Posterior cingulate gyrus (tissue), 11 donors: ENCODE measurements at regions of chr6 and their contacts with region 1.

Region 1: DNA sequence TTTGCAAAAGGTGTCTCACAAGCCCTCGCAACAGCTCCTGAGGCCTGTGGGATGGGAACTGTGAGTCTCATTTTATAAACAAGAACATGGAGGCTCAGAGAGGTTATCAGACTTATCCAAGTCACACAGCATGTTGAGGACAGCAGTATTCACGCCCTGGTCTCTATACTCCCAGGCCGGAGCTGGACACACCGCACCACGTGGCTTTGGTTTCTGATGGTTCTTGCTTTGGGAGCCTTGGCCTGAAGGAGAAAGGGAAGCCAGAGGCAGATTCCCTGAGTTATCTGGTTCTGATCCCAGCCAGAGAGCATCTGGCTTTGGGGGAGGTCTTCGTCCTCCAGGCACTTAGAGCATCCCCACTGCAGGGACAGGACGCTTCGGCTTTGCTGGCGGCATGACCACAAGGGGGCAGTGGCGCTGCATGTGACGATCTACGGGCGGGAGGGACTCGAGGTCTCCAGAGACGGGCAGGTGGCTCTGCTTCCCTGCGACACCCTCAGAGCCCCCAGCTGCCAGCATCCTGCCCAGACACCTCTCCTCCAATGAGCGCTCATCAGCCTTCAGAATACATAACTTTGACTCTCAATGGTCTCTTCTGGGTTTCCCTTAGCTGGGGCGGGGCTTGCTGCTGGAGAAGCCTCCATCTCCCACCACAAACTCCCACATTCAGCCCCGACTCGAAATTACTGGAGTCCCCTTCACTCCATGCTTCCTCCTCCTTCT is 51.4 kb upstream of the SAYSD1 start:
- DNase-seq: peak; percentile 58 to 97 (median 84)

Region 2: DNA sequence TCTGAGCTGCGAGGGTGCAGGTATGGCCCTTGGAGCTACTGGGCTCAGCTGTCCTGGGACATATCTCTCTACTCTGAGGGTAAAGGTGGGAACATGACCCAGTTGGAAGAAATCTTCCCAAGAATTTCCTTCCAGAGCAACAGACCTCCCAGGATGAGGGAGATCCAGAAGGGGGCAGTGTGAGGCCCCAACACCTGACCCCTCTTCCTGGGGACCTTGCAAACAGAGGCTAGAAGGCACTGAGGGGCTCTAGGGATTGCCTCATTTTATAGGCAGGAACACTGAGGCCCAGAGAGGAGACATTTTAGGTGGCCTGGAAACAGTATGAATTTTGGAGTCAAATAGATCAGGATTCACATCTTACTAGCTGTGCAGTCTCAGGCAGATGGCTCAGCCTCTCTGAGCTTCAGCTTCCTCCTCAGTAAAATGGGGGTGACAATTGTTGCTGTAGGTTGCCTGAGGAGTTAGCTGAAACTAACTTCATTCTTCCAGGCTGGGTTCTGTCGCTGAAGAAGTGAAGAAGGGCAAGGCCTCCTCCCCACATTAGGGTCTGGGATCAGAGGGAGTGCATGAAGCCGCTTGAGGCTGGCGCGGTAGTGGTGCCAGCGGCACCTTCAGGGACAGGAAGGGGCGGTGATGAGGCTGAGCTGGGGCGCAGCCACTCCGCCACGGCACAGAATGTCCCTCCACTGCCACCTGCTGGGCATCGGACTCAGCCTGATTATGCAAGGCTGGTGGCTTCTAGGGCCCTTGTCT is 136.5 kb after region 1 on chr6:
- intact Hi-C with region 1: loop called (anchors 1 kb)
- DNase-seq: peak; percentile 61 to 95 (median 81)